ENCODE measurements at regions of chr3 and their contacts with region 1.

Region 1: DNA sequence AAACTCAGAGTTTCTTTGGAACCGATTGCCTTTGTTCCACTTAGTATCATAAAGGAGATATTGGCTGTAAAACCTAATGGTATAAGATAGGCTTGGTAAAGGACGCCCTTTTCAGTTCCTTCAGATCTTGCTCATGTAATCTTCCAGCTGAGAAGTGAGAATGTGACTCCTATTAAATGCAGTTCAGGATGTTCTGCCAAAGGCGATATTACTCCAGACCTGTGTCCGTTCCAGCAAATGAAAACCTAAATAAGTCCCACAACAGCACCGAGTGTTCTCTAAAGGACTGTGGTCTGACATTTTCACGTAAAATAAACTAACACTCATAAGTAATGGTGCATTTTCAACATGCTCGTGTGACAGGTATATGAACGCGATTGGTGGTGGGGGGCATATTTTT is 276.2 kb downstream of the FEZF2 start:
- DNase-seq: peak; percentile 48
- H3K4me3 ChIP-seq: no peak overlapping the region
- H3K27ac ChIP-seq: peak overlapping the region; percentile 31 to 48
- H3K4me1 ChIP-seq: no peaks in the 10 kb centered on the region
- H3K27me3 ChIP-seq: no peaks in the 10 kb centered on the region
- CTCF ChIP-seq: no peak
- POLR2A ChIP-seq: no peak

Region 2: DNA sequence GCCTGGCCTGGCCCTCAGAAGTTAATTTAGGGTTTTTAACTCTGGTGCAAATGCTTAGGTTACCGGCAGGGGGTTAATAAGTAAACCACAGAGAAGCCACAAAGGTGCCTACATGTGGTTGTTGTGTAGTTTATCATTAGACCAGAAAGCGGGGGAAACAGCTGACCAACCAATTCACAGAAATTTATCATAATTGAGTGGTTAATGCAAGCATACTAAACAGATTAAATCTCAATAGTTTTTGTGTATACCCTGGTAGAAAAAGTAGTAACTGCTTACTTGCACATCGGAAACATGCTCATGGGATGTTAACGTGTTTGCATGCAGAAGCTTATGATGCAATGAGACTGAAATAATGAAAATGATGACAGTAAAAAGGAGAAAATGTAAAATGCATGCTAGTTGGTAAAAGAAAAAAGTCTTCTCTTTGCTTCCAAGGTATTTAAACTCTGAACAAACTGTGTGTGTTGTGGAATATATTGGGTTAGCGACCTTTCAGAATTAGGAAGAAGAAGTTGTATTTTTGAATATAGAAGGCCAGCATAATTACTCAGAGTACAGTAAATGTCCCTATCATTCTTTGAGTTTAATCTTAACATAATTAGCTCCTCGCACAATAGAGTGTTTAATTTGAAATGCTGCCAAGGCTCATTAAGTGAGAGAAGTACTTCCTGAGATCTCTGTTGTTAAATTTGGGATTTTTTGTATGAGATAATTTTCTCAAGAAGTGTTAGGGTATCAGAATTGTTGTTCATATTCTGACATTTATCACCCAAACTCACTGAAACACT is 219.6 kb before region 1 on chr3:
- intact Hi-C with region 1: loop called (anchors 10 kb)
- DNase-seq: no peak
- H3K4me3 ChIP-seq: no peak overlapping the region
- H3K27ac ChIP-seq: no peak overlapping the region
- H3K4me1 ChIP-seq: no peaks in the 10 kb centered on the region
- H3K27me3 ChIP-seq: no peaks in the 10 kb centered on the region
- CTCF ChIP-seq: no peak
- POLR2A ChIP-seq: no peak

Region 3: DNA sequence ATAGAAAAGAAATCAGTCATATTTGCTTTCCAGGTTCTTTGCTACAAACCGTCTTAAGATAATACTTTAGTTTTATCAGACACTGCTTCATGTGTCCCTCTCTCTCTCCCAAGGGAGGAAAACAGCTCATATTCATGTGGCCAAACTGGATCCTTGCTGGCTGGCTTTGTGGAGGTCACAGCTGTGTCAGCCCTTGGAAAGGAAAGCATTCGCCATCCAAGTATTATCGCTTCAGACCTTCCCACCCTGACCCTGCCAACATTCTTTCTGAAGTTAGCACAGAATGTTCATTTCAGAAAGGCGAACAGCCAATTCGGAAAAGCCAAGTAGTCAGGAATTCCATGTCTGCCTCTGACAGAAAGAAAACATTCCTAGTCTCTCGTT is 62.6 kb after region 1 on chr3:
- intact Hi-C with region 1: loop called (anchors 2 kb)
- DNase-seq: peak; percentile 32
- H3K4me3 ChIP-seq: no peak overlapping the region
- H3K27ac ChIP-seq: peak overlapping the region; percentile 60 to 63
- H3K4me1 ChIP-seq: peaks cover 3% of the 10 kb centered on the region
- H3K27me3 ChIP-seq: no peaks in the 10 kb centered on the region
- CTCF ChIP-seq: no peak
- POLR2A ChIP-seq: no peak